Calu3 (cell line): ENCODE measurements at regions of chr13 and their contacts with region 1.

Region 1: DNA sequence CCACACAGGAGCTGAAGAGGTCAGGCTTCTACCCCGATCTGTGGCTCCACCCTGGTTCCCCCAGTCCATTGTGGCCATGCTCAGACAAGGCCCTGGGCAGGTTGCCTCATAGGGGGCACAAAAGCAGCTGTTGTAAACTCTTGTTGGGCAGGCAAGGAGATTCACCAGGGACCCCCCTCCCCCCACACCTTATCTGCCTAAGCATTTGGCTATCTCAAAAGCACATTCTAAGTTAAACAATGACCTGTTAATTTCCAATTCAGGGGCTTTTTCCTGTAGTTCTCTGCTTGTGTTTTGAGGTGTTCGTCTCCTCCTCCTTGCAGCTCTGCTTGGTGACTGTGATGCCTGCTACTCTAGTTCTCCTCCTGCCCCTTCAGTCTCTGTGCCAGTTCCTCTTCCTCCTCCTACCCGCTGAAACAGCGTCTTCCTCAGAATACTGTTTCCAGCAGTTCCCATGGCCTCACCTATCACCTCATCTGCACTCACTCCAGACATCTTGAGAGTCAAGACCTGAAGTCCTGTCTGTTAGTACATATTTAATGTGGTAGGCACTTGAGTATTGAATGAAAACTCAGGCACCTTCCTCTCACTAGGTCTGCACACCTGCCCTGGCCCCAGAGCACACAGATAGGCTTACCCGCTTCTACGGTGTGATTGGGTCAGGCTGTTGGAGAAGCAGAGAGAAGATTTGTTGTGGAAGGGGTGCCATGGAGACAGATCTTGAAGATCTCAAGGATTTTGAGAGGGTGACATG is 31.7 kb downstream of the SPATA13 start:
- DNase-seq: no peak
- H3K4me3 Mint-ChIP-seq: peak overlapping the region; percentile 61
- H3K27ac Mint-ChIP-seq: peak overlapping the region; percentile 74
- H3K4me1 Mint-ChIP-seq: peaks cover 41% of the 10 kb centered on the region
- H3K27me3 Mint-ChIP-seq: no peaks in the 10 kb centered on the region
- CTCF ChIP-seq: no peak

Region 2: DNA sequence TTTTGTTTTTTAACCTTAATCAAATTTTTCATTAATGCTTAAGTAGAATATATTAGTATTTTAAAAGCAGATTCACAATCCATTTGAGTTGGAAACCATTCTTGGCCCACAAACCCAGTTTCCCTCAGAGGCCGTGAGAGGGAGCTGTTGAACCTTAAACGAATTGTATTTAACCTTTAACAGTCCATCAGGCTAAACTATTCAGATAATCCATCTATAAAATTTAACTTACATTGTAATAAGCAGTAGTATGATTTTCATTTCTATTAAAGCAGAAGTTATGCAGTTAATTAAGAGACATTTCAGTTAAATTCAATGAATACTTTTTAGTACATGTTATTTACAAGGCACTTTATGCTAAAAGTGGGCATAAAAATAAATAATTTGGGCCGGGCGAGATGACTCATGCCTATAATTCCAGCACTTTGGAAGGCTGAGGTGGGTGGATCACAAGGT is 171.8 kb before region 1 on chr13:
- CTCF ChIA-PET with region 1: interaction called, 5 read pairs
- intact Hi-C with region 1: loop called (anchors 1 kb)
- DNase-seq: peak; percentile 52
- H3K4me3 Mint-ChIP-seq: no peak overlapping the region
- H3K27ac Mint-ChIP-seq: no peak overlapping the region
- H3K4me1 Mint-ChIP-seq: no peaks in the 10 kb centered on the region
- H3K27me3 Mint-ChIP-seq: no peaks in the 10 kb centered on the region
- CTCF ChIP-seq: no peak

Region 3: GRCh38 chr13:24148399-24149305 is 43.6 kb before region 1 on chr13:
- CTCF ChIA-PET with region 1: interaction called, 3 read pairs
- intact Hi-C with region 1: loop called (anchors 10 kb)
- DNase-seq: peak; percentile 80
- H3K4me3 Mint-ChIP-seq: peak overlapping the region; percentile 25
- H3K27ac Mint-ChIP-seq: peak overlapping the region; percentile 90
- H3K4me1 Mint-ChIP-seq: peaks cover 66% of the 10 kb centered on the region
- H3K27me3 Mint-ChIP-seq: no peaks in the 10 kb centered on the region
- CTCF ChIP-seq: no peak

Region 4: DNA sequence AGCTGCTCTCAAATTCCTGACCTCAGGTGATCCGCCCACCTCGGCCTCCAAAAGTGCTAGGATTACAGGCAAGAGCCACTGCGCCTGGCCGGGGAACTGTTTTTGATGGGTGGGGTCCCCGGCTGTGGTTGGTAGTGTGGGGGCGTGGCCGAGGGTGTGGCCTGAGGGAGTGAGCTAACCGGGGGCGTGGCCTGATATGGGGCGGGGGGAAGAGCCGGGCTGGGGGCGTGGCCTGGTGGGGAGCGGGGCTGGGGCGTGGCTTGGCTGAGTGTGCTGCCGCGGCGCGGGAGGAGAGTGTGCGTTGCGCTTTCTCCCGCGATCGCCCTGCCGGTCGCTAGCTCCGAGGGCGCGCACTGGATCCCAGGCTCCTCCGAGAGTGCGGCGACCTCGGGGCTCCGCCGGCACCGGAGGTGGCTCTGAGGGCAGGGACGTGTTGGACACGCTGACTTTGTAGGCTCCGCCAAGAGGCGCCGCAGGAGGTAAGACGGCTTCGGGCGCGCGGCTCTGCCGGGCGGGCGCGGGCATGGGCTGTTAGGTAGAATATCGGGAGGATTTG is 31.7 kb before region 1 on chr13 and contains the start of gene SPATA13:
- CTCF ChIA-PET with region 1: interaction called, 9 read pairs
- intact Hi-C with region 1: loop called (anchors 5 kb)
- DNase-seq: peak; percentile 95
- H3K4me3 Mint-ChIP-seq: peak within 1 kb of the TSS; percentile 78
- H3K27ac Mint-ChIP-seq: peak within 1 kb of the TSS; percentile 34
- H3K4me1 Mint-ChIP-seq: peaks cover 10% of the 10 kb centered on the region
- H3K27me3 Mint-ChIP-seq: no peaks in the 10 kb centered on the region
- CTCF ChIP-seq: no peak
- total RNA-seq, gene SPATA13: 33.8 and 35.9 TPM in 2 replicates

Region 5: DNA sequence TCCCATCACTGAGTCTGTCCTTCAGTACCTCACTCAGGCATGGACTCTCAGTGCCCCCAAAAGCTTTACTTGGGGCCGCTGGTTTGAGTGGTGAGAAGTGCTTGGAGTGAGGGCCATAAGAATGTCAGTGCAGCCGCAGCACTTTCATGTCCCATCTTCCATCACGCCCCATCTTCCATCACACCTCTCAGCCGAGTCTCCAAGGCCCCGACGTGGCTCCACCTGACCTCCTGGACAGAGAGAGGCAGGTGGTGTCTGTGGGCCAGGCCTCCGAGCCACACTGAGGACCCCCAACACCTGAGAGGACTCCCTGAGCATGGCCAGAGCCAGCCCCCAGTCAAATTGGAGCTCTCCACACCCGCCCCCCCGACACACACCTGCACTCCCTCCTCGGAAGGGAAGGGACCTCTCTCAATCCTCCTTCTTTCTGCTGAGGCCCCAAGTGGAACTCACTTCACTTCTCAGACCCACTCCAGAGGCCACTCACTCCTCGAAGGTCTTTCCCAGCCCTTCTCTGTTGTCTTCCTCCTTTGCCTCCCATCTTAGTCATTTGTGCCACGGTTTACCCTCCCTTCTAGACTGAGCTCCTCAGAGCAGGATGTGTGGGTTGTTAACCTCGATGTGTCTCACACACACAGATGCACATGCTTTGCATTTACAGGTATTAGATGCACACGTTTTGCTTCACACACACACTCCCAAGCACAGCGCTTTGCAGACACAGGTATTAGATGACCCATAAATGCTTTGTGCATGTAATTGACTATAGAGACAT is 422.3 kb after region 1 on chr13:
- CTCF ChIA-PET with region 1: no interaction called
- intact Hi-C with region 1: no loop called
- DNase-seq: no peak
- H3K4me3 Mint-ChIP-seq: no peak overlapping the region
- H3K27ac Mint-ChIP-seq: no peak overlapping the region
- H3K4me1 Mint-ChIP-seq: peaks cover 10% of the 10 kb centered on the region
- H3K27me3 Mint-ChIP-seq: no peaks in the 10 kb centered on the region
- CTCF ChIP-seq: no peak